IMR-90 (cell line): ENCODE measurements at regions of chr4 and their contacts with region 1.

Region 1: DNA sequence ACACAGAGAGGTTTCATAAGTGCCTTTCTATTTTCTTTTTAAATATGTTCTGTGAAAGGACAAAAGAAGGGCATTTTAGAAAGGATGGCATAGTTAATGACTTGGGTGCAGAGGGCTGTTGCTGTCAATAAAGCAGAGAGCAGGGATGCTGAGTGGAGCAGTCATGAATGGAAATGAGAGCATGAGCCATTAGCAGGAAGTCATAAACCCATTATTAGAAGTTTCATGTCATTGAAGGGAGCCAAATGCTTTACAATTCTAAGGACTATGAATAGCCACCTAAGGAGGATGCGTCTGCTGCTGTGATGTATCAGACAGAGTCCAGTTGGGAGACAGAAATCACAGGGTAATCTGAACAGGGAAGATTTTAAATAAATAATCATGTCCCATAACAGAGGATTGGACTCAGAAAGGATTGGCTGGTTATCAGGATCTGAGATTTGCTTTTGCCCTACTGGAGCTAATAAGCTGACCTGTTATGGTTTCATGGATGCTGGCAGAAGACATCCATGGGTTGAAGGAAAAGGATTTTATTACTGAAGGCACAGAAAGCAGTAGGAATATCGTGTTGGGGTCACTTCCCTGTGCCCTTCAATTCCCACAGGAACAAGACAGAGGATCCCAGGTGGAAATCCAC is 47.5 kb upstream of the WDR19 start:
- DNase-seq: peak; percentile 1
- ATAC-seq: peak; percentile 24
- H3K4me3 ChIP-seq: no peak overlapping the region
- H3K27ac ChIP-seq: no peak overlapping the region; the same call in 1 of the 2 replicates
- H3K4me1 ChIP-seq: peaks cover 4% of the 10 kb centered on the region; the same call in 1 of the 2 replicates
- H3K27me3 ChIP-seq: no peaks in the 10 kb centered on the region
- CTCF ChIP-seq: no peak
- POLR2A ChIP-seq: no peak
- RAD21 ChIP-seq: no peak

Region 2: GRCh38 chr4:38759113-38759789 is 375.6 kb before region 1 on chr4:
- CTCF ChIA-PET with region 1: interaction called, 9 read pairs
- POLR2A ChIA-PET with region 1: no interaction called
- dilution Hi-C with region 1: no loop called
- in situ Hi-C with region 1: loop called (anchors 5 kb)
- intact Hi-C with region 1: loop called (anchors 1 kb)
- DNase-seq: peak; percentile 80
- ATAC-seq: peak; percentile 95
- H3K4me3 ChIP-seq: no peak overlapping the region
- H3K27ac ChIP-seq: no peak overlapping the region
- H3K4me1 ChIP-seq: no peaks in the 10 kb centered on the region
- H3K27me3 ChIP-seq: no peaks in the 10 kb centered on the region
- CTCF ChIP-seq: peak; percentile 83
- POLR2A ChIP-seq: no peak
- RAD21 ChIP-seq: peak; percentile 83

Region 3: GRCh38 chr4:38785901-38786402 is 348.8 kb before region 1 on chr4:
- CTCF ChIA-PET with region 1: no interaction called
- POLR2A ChIA-PET with region 1: no interaction called
- dilution Hi-C with region 1: no loop called
- in situ Hi-C with region 1: no loop called
- intact Hi-C with region 1: no loop called
- DNase-seq: no peak
- ATAC-seq: no peak
- H3K4me3 ChIP-seq: no peak overlapping the region
- H3K27ac ChIP-seq: no peak overlapping the region
- H3K4me1 ChIP-seq: no peaks in the 10 kb centered on the region
- H3K27me3 ChIP-seq: peaks cover 2% of the 10 kb centered on the region
- CTCF ChIP-seq: no peak
- POLR2A ChIP-seq: no peak
- RAD21 ChIP-seq: no peak

Region 4: GRCh38 chr4:38902695-38903094 is 232.1 kb before region 1 on chr4:
- CTCF ChIA-PET with region 1: interaction called, 9 read pairs
- POLR2A ChIA-PET with region 1: no interaction called
- dilution Hi-C with region 1: no loop called
- in situ Hi-C with region 1: no loop called
- intact Hi-C with region 1: loop called (anchors 2 kb)
- DNase-seq: no peak
- ATAC-seq: peak; percentile 40; the same call in 1 of the 2 replicates
- H3K4me3 ChIP-seq: no peak overlapping the region
- H3K27ac ChIP-seq: no peak overlapping the region
- H3K4me1 ChIP-seq: 0 out of 2 replicates have a peak, but pooled peaks cover 2% of the 10 kb centered on the region
- H3K27me3 ChIP-seq: no peaks in the 10 kb centered on the region
- CTCF ChIP-seq: peak; percentile 30; the same call in 1 of the 2 replicates
- POLR2A ChIP-seq: no peak
- RAD21 ChIP-seq: peak; percentile 35

Region 5: DNA sequence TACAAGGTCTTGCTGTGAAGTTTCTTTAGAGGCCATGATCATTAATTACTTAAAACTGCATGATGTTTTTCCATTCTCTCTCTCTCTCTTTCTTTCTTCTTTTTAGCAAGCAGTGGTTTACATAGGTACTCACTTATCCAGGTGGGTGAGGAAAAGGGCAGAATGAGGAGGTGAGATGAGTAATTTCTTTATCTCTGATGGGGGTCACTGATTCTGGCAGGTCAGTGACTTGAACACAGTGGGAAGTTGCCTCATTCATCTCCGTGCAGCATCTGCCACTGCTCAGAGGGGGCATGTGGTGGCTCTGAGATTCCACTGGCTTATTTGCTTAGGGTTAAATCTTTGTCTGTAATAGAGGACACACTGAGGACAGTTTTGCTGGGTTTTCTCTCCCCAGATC is 204.6 kb before region 1 on chr4:
- CTCF ChIA-PET with region 1: interaction called, 12 read pairs
- POLR2A ChIA-PET with region 1: no interaction called
- dilution Hi-C with region 1: no loop called
- in situ Hi-C with region 1: no loop called
- intact Hi-C with region 1: loop called (anchors 5 kb)
- DNase-seq: no peak
- ATAC-seq: no peak
- H3K4me3 ChIP-seq: no peak overlapping the region
- H3K27ac ChIP-seq: no peak overlapping the region
- H3K4me1 ChIP-seq: peaks cover 2% of the 10 kb centered on the region; the same call in 1 of the 2 replicates
- H3K27me3 ChIP-seq: no peaks in the 10 kb centered on the region
- CTCF ChIP-seq: no peak
- POLR2A ChIP-seq: no peak
- RAD21 ChIP-seq: no peak

Region 6: DNA sequence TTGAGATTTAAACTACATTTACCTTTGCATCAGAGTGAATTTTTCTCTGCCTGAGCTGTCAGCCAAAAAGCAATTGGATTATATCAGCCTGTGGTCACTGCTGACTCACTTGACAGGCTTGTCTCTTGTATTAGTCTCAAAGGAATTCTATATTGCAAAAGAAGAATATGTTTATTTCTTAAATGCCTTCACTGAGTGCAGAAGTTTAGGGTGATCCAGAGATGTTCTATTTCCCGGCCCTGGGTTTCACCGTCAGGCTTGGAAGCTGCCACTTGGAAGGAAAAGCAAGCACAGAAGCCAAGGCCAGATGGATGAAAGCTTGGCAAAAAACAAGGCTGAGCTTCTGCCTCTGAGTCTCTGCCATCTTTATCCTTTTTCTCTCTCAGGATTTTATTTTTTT is 186.2 kb before region 1 on chr4:
- CTCF ChIA-PET with region 1: interaction called, 4 read pairs
- POLR2A ChIA-PET with region 1: no interaction called
- dilution Hi-C with region 1: no loop called
- in situ Hi-C with region 1: no loop called
- intact Hi-C with region 1: loop called (anchors 2 kb)
- DNase-seq: peak; percentile 95
- ATAC-seq: peak; percentile 87
- H3K4me3 ChIP-seq: no peak overlapping the region
- H3K27ac ChIP-seq: peak overlapping the region; percentile 87
- H3K4me1 ChIP-seq: peaks cover 23% of the 10 kb centered on the region
- H3K27me3 ChIP-seq: no peaks in the 10 kb centered on the region
- CTCF ChIP-seq: no peak
- POLR2A ChIP-seq: no peak
- RAD21 ChIP-seq: peak; percentile 30